ENCODE measurements at regions of chr6 and their contacts with region 1.

Region 1: GRCh38 chr6:30533460-30534294 is 22.6 kb downstream of the GNL1 start:
- DNase-seq: no peak
- H3K4me3 Mint-ChIP-seq: peak overlapping the region; percentile 53
- H3K27ac Mint-ChIP-seq: peak overlapping the region; percentile 55
- H3K4me1 Mint-ChIP-seq: peaks cover 52% of the 10 kb centered on the region
- H3K27me3 Mint-ChIP-seq: no peaks in the 10 kb centered on the region

Region 2: GRCh38 chr6:30483677-30484279 is 49.9 kb before region 1 on chr6:
- intact Hi-C with region 1: loop called (anchors 1 kb)
- DNase-seq: no peak
- H3K4me3 Mint-ChIP-seq: no peak overlapping the region
- H3K27ac Mint-ChIP-seq: no peak overlapping the region
- H3K4me1 Mint-ChIP-seq: peaks cover 44% of the 10 kb centered on the region
- H3K27me3 Mint-ChIP-seq: peaks cover 40% of the 10 kb centered on the region

Region 3: DNA sequence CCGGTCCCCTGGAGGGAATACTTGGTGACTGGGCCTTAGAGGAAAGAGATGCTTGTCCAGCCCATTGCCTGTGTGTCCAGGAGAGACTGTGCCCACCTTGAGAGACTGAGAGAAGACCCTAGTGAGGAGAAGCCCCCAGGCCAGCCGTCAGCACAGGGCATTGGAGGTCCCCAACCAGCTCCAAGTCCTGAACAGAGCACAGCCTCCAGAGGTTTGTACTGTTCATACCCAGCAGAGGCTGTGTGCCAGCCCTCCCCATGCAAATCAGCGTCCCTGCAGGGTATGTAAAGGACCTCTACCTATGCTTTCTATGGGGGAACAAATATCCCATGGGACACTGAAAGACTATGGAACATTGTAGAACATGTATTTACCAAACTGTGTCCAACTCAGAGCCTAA is 36.0 kb before region 1 on chr6:
- intact Hi-C with region 1: loop called (anchors 1 kb)
- DNase-seq: no peak
- H3K4me3 Mint-ChIP-seq: no peak overlapping the region
- H3K27ac Mint-ChIP-seq: no peak overlapping the region
- H3K4me1 Mint-ChIP-seq: peaks cover 59% of the 10 kb centered on the region
- H3K27me3 Mint-ChIP-seq: no peaks in the 10 kb centered on the region

Region 4: GRCh38 chr6:30515932-30516753 is 17.5 kb before region 1 on chr6:
- intact Hi-C with region 1: loop called (anchors 1 kb)
- DNase-seq: peak; percentile 88
- H3K4me3 Mint-ChIP-seq: peak overlapping the region; percentile 83
- H3K27ac Mint-ChIP-seq: peak overlapping the region; percentile 97
- H3K4me1 Mint-ChIP-seq: peaks cover 49% of the 10 kb centered on the region
- H3K27me3 Mint-ChIP-seq: no peaks in the 10 kb centered on the region

Region 5: GRCh38 chr6:30556066-30556905 is 22.6 kb after region 1 on chr6 and contains the start of gene GNL1:
- intact Hi-C with region 1: no loop called
- DNase-seq: peak; percentile 96
- H3K4me3 Mint-ChIP-seq: peak within 1 kb of the TSS; percentile 96
- H3K27ac Mint-ChIP-seq: peak within 1 kb of the TSS; percentile 99
- H3K4me1 Mint-ChIP-seq: peaks cover 36% of the 10 kb centered on the region
- H3K27me3 Mint-ChIP-seq: no peaks in the 10 kb centered on the region
- total RNA-seq, gene GNL1: 86.3 and 92.4 TPM in 2 replicates

Region 6: DNA sequence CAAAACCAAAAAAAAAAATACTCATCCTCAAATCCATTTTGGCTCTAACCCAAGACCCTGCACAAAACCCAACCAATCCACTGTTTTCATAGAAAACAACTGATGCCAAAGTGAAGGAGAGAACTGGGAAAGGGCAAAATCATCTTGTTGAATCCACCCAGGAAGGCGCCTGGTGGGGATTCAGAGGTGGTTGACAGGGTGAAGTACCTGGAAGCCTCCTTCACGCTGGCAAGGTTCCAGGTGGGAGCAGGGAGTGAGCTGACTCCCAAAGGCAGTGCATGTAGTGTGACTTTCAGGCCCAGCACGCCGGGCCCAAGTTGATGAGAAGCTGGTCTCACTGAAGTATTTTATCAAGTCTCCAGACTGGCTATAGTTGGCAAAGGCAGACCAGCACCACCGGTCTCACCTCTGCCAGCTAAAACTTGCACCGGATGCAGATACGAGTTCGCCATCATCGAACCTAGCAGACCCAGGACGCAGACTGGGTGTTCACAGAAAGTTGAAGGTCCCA is 66.8 kb after region 1 on chr6:
- intact Hi-C with region 1: no loop called
- DNase-seq: no peak
- H3K4me3 Mint-ChIP-seq: no peak overlapping the region
- H3K27ac Mint-ChIP-seq: no peak overlapping the region
- H3K4me1 Mint-ChIP-seq: peaks cover 18% of the 10 kb centered on the region
- H3K27me3 Mint-ChIP-seq: no peaks in the 10 kb centered on the region

Region 7: DNA sequence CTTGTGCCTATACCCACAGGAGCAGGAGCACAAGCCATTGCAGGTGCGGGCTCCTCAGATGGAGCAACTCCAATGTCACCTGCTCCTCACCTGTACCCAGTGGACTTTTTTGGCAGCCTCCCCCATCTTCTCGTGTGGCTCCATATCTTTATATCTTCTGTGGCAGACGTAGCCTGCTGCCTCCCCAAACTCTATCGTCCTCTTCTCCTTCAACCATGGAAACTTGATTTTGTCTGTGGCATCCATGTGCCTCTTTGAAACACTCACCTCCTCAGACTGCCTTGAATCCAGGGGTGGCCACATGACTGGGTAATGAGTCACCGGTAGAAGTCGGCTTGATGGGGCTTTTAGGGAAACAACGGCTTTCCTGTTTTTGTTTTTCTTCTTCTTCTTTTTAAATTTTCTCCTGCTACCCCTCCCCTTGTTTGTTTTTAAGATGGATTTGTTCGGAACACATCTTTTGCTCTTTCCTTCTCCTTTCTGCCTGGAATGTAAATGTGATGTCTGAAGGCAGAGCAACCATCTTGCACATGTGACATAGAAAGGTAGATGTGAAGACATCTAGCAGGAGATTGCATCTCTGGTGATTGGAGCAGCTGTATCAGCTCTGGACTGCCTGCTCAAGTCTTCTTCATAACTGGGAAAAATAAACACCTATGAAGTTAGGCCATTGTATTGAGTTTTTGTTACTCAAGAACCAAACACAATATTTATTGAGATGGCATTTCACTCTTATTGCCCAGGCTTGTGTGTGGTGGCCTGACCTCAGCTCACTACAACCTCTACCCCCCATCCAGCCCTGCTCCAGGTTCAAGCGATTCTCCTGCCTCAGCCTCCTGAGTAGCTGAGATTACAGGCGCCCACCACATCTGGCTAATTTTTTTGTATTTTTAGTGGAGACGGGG is 280.7 kb after region 1 on chr6:
- intact Hi-C with region 1: loop called (anchors 5 kb)
- DNase-seq: peak; percentile 47
- H3K4me3 Mint-ChIP-seq: peak overlapping the region; percentile 72
- H3K27ac Mint-ChIP-seq: peak overlapping the region; percentile 99
- H3K4me1 Mint-ChIP-seq: peaks cover 86% of the 10 kb centered on the region
- H3K27me3 Mint-ChIP-seq: peaks cover 1% of the 10 kb centered on the region

Measured in activated T-helper 1 cell treated with anti-CD3 and anti-CD28 coated beads, Interleukin-12 subunit alpha, Interleukin-12 subunit beta, Interleukin-2, Interleukin-4 antibody, amounts not matched to agents 30 ng/mL and 10 ng/mL and 1 ng/mL, durations not matched to agents 14 hours and 24 hours and 36 hours (primary cell).